CD4-positive, alpha-beta memory T cell (primary cell): ENCODE measurements at regions of chr4 and their contacts with region 1.

Region 1: GRCh38 chr4:168923526-168924194 is 86.4 kb downstream of the CBR4 start:
- DNase-seq: peak; percentile 42 to 53 (median 48)
- H3K4me3 ChIP-seq: no peak overlapping the region
- H3K4me3 Mint-ChIP-seq: no peak overlapping the region
- H3K27ac ChIP-seq: no peak overlapping the region
- H3K27ac Mint-ChIP-seq: no peak overlapping the region
- H3K4me1 ChIP-seq: no peaks in the 10 kb centered on the region
- H3K4me1 Mint-ChIP-seq: peaks cover 0 to 3% (median 0%) of the 10 kb centered on the region in 4 donors
- H3K27me3 ChIP-seq: no peaks in the 10 kb centered on the region
- H3K27me3 Mint-ChIP-seq: no peaks in the 10 kb centered on the region

Region 2: GRCh38 chr4:168908093-168908492 is 15.6 kb before region 1 on chr4:
- CTCF ChIA-PET with region 1: interaction called, 43 read pairs
- POLR2A ChIA-PET with region 1: no interaction called
- intact Hi-C with region 1: no loop called
- DNase-seq: no peak
- H3K4me3 ChIP-seq: no peak overlapping the region
- H3K4me3 Mint-ChIP-seq: no peak overlapping the region
- H3K27ac ChIP-seq: no peak overlapping the region
- H3K27ac Mint-ChIP-seq: no peak overlapping the region
- H3K4me1 ChIP-seq: no peaks in the 10 kb centered on the region
- H3K4me1 Mint-ChIP-seq: no peaks in the 10 kb centered on the region
- H3K27me3 ChIP-seq: no peaks in the 10 kb centered on the region
- H3K27me3 Mint-ChIP-seq: no peaks in the 10 kb centered on the region

Region 3: DNA sequence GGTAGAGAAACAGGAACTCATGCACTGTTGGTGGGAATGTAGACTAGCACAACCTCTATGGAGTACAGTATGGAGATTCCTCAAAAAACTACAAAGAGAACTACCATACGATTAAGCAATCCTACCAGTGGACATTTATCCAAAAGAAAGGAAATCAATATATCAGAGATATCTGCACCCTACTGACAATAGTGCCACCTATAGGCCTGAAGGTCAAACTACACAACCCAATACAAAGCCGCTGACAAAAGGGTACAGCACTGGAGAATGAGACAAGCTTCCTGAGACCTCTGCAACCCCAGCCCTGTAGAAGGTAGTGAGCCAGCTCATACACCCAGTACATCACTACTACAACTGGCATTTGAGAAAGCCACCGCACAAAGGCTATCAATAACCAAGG is 19.3 kb after region 1 on chr4:
- CTCF ChIA-PET with region 1: interaction called, 12 read pairs
- POLR2A ChIA-PET with region 1: no interaction called
- intact Hi-C with region 1: no loop called
- DNase-seq: peak in 1 of 5 donors; percentile 9
- H3K4me3 ChIP-seq: no peak overlapping the region
- H3K4me3 Mint-ChIP-seq: no peak overlapping the region
- H3K27ac ChIP-seq: no peak overlapping the region
- H3K27ac Mint-ChIP-seq: no peak overlapping the region
- H3K4me1 ChIP-seq: no peaks in the 10 kb centered on the region
- H3K4me1 Mint-ChIP-seq: no peaks in the 10 kb centered on the region
- H3K27me3 ChIP-seq: no peaks in the 10 kb centered on the region
- H3K27me3 Mint-ChIP-seq: no peaks in the 10 kb centered on the region

Region 4: GRCh38 chr4:169485791-169486742 is 562.4 kb after region 1 on chr4:
- CTCF ChIA-PET with region 1: interaction called, 32 read pairs
- POLR2A ChIA-PET with region 1: no interaction called
- intact Hi-C with region 1: loop called (anchors 1 kb)
- DNase-seq: peak in 4 of 5 donors; percentile 10 to 37 (median 17)
- H3K4me3 ChIP-seq: no peak overlapping the region
- H3K4me3 Mint-ChIP-seq: no peak overlapping the region
- H3K27ac ChIP-seq: no peak overlapping the region
- H3K27ac Mint-ChIP-seq: no peak overlapping the region
- H3K4me1 ChIP-seq: no peaks in the 10 kb centered on the region
- H3K4me1 Mint-ChIP-seq: peaks cover 0 to 3% (median 0%) of the 10 kb centered on the region in 4 donors
- H3K27me3 ChIP-seq: no peaks in the 10 kb centered on the region
- H3K27me3 Mint-ChIP-seq: no peaks in the 10 kb centered on the region

Region 5: DNA sequence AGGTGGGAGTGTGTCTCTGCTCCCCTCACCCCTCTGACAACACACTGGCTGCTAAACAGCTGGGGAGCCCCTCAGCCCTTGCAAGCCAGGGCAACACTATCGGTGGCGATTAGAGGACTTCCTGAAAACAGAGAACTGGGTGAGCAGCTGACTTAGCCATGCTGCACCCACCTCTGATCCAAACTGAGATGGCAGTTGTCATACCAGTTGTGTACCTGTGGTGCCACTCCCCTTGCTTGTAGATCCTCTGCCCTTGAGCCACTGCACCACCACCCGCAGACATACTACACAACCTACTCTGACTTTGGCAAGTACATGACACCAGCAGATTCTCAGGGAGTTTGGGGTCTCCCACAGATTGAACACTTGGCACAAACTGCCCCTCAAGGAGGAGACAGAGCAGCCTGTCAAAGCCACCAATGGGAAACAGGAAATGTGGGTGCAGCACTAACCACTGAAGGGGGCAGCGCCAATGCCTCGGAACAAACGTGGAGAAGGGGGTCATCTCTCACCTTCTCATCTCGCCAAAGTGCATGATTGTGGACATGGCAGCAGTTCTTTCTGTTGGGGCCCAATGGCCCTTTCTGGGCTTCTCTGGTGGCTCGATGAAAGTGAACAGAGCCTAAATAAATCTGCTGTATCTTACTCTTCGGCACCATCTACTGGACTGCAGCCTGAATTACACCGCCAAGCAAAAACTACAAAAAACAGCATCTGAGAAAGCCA is 568.9 kb after region 1 on chr4:
- CTCF ChIA-PET with region 1: interaction called, 32 read pairs
- POLR2A ChIA-PET with region 1: no interaction called
- intact Hi-C with region 1: loop called (anchors 1 kb)
- DNase-seq: peak in 4 of 5 donors; percentile 18 to 28 (median 24)
- H3K4me3 ChIP-seq: no peak overlapping the region
- H3K4me3 Mint-ChIP-seq: peak overlapping the region in 1 of 8 donors; percentile 0
- H3K27ac ChIP-seq: no peak overlapping the region
- H3K27ac Mint-ChIP-seq: peak overlapping the region in 2 of 7 donors; percentile 5 to 43
- H3K4me1 ChIP-seq: no peaks in the 10 kb centered on the region
- H3K4me1 Mint-ChIP-seq: peaks cover 0 to 16% (median 5%) of the 10 kb centered on the region in 4 donors
- H3K27me3 ChIP-seq: no peaks in the 10 kb centered on the region
- H3K27me3 Mint-ChIP-seq: no peaks in the 10 kb centered on the region

Region 6: GRCh38 chr4:169566021-169566818 is 642.6 kb after region 1 on chr4:
- CTCF ChIA-PET with region 1: interaction called, 30 read pairs
- POLR2A ChIA-PET with region 1: no interaction called
- intact Hi-C with region 1: loop called (anchors 1 kb)
- DNase-seq: peak in 4 of 5 donors; percentile 23 to 40 (median 26)
- H3K4me3 ChIP-seq: no peak overlapping the region
- H3K4me3 Mint-ChIP-seq: no peak overlapping the region
- H3K27ac ChIP-seq: no peak overlapping the region
- H3K27ac Mint-ChIP-seq: no peak overlapping the region
- H3K4me1 ChIP-seq: no peaks in the 10 kb centered on the region
- H3K4me1 Mint-ChIP-seq: peaks cover 4 to 5% (median 4%) of the 10 kb centered on the region in 4 donors
- H3K27me3 ChIP-seq: no peaks in the 10 kb centered on the region
- H3K27me3 Mint-ChIP-seq: no peaks in the 10 kb centered on the region

Region 7: GRCh38 chr4:170047771-170048354 is 1124.2 kb after region 1 on chr4:
- CTCF ChIA-PET with region 1: interaction called, 10 read pairs
- POLR2A ChIA-PET with region 1: no interaction called
- intact Hi-C with region 1: no loop called
- DNase-seq: peak; percentile 54 to 61 (median 56)
- H3K4me3 ChIP-seq: no peak overlapping the region
- H3K4me3 Mint-ChIP-seq: no peak overlapping the region
- H3K27ac ChIP-seq: no peak overlapping the region
- H3K27ac Mint-ChIP-seq: no peak overlapping the region
- H3K4me1 ChIP-seq: no peaks in the 10 kb centered on the region
- H3K4me1 Mint-ChIP-seq: no peaks in the 10 kb centered on the region
- H3K27me3 ChIP-seq: no peaks in the 10 kb centered on the region
- H3K27me3 Mint-ChIP-seq: peaks cover 2% of the 10 kb centered on the region in 2 donors